ENCODE measurements at regions of chr2 and their contacts with region 1.

Region 1: DNA sequence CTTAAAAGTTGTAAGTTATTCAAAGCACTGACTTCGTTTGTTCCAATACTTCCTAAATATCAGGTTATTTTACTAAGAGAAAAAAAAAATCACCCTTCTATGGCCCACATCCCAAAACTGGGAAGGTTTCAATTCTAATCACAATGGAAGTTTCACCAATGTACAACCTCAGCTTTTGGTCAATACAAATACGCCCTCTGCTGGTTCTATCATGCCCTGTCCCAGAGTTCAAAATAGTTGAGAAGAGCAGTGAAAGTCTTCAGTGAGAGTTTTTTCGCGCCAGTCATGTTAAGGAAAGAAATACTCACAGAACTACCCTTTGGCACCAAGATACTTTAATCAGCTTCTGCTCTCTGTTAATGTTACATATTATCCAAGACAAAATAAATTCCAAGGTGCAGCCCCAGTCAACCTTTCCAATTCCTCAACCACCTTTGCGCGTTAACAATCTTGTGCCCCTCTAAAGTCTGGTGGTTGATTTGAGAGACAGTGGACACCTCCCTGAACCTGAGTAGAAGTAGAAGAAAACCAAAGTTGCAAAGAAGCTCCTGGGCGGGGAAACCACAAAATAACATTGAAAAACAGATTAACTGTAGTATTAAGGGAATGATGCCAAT is 59.9 kb downstream of the SUMO1 start:
- DNase-seq: peak; percentile 55 to 85
- H3K4me3 ChIP-seq: no peak overlapping the region
- H3K27ac ChIP-seq: no peak overlapping the region
- H3K4me1 ChIP-seq: no peaks in the 10 kb centered on the region
- H3K27me3 ChIP-seq: no peaks in the 10 kb centered on the region
- CTCF ChIP-seq: peak in 5 of 7 experiments; percentile 66 to 85 (median 81)
- EP300 ChIP-seq: no peak
- POLR2A ChIP-seq: no peak

Region 2: DNA sequence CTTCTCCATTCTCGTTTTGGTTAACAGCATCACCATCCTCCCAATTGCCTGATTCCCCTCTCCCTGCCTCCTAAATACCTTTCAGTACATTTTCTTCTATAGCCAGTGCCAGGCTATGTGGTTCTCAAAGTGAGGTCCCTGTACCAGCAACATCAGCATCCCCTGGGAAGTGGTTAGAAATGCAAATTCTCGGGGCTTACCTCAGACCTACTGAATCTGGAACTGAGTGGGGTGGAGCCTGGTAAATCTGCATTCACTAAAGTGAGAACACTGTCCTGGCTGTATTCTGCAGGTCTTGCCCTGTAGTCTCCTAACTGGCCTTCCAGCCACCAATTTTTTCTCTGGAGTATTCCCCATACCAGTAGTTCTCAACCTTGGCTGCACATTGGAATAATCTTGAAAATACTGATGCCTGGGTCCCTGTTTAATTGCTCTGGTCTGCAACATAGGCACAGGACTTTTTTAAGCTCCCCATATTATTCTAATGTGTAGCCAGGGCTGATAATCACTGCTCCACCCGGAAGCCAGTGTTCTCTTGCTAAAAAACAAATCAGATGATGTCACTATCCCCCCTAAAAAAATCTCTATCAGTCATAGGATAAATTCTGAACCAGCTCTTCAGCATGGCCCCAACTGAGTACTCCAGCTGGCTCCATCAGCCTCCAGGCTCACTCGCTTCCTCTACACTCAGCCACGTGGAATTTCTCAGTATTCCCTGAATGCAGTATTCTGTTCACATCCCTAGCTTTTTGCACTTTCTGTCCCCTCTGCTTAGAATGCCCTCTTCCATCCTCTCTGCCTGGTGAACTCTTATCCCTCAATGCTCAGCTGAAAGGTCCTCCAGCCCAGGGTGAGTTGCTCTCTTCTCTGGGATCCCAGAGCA is 273.7 kb before region 1 on chr2:
- intact Hi-C with region 1: no loop called
- DNase-seq: no peak
- H3K4me3 ChIP-seq: no peak overlapping the region
- H3K27ac ChIP-seq: no peak overlapping the region
- H3K4me1 ChIP-seq: peaks cover 0 to 6% (median 0%) of the 10 kb centered on the region in 4 donors
- H3K27me3 ChIP-seq: no peaks in the 10 kb centered on the region
- CTCF ChIP-seq: no peak
- EP300 ChIP-seq: no peak
- POLR2A ChIP-seq: no peak

Region 3: GRCh38 chr2:202023198-202023903 is 155.1 kb before region 1 on chr2:
- intact Hi-C with region 1: no loop called
- DNase-seq: peak in 1 of 2 donors; percentile 33
- H3K4me3 ChIP-seq: no peak overlapping the region
- H3K27ac ChIP-seq: no peak overlapping the region
- H3K4me1 ChIP-seq: peaks cover 0 to 22% (median under 1%) of the 10 kb centered on the region in 4 donors
- H3K27me3 ChIP-seq: no peaks in the 10 kb centered on the region
- CTCF ChIP-seq: no peak
- EP300 ChIP-seq: no peak
- POLR2A ChIP-seq: no peak

Region 4: GRCh38 chr2:202034249-202035088 is 144.0 kb before region 1 on chr2:
- intact Hi-C with region 1: loop called (anchors 5 kb)
- DNase-seq: peak in 1 of 2 donors; percentile 65
- H3K4me3 ChIP-seq: peak overlapping the region; percentile 76 to 84 (median 78)
- H3K27ac ChIP-seq: peak overlapping the region; percentile 88 to 96 (median 89)
- H3K4me1 ChIP-seq: peaks cover 33 to 55% (median 41%) of the 10 kb centered on the region in 4 donors
- H3K27me3 ChIP-seq: peaks cover 3 to 51% (median 34%) of the 10 kb centered on the region in 3 donors
- CTCF ChIP-seq: no peak
- EP300 ChIP-seq: no peak
- POLR2A ChIP-seq: no peak

Measured in stomach (tissue), 19 donors.